Activated B cell treated with CpG ODN at 0.5 μM for 24 hours (primary cell): ENCODE measurements at regions of chr6 and their contacts with region 1.

Region 1: DNA sequence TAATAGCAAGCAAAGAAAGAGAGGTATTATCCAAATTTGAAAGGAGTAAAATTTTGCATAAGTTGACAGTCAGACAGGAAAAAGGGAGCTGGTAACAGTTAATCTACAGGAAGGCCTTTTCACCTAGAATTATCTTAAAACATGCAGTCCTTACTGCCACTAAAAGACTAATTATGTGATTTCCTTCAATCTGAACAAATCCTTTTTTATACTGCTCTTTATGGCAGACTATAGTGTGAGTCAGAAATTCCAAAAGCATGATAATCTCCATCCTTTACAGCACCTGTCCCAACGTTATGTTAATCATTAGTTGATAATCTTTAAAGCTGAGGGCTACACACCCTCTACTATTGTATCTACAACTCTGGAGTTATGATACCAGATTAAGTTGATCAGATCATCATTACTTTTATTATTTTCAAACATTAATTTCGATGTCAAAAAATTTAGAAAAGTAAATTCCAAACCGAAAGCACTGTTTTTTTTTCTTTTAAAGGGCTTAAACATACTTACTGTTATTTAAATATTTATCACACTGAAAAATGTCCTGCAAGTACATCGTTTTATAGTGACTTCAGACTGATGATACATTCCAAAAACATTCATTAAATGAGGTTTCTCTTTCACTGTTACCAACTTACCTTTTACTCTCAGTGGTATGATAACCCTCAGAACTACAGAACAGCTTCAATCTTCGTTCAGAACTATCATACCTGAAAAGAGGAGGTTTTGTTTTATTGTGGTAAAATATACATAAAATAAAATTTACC is 33.2 kb upstream of the AKAP7 start:
- DNase-seq: no peak
- ATAC-seq: no peak
- H3K4me3 Mint-ChIP-seq: no peak overlapping the region
- H3K27ac Mint-ChIP-seq: no peak overlapping the region
- H3K4me1 Mint-ChIP-seq: peaks cover 3% of the 10 kb centered on the region
- H3K27me3 Mint-ChIP-seq: no peaks in the 10 kb centered on the region
- CTCF ChIP-seq: no peak

Region 2: GRCh38 chr6:131073577-131073976 is 28.5 kb before region 1 on chr6:
- CTCF ChIA-PET with region 1: no interaction called
- POLR2A ChIA-PET with region 1: no interaction called
- intact Hi-C with region 1: loop called (anchors 1 kb)
- DNase-seq: no peak
- ATAC-seq: no peak
- H3K4me3 Mint-ChIP-seq: no peak overlapping the region
- H3K27ac Mint-ChIP-seq: no peak overlapping the region
- H3K4me1 Mint-ChIP-seq: no peaks in the 10 kb centered on the region
- H3K27me3 Mint-ChIP-seq: no peaks in the 10 kb centered on the region
- CTCF ChIP-seq: no peak